ENCODE measurements at regions of chr22 and their contacts with region 1.

Region 1: DNA sequence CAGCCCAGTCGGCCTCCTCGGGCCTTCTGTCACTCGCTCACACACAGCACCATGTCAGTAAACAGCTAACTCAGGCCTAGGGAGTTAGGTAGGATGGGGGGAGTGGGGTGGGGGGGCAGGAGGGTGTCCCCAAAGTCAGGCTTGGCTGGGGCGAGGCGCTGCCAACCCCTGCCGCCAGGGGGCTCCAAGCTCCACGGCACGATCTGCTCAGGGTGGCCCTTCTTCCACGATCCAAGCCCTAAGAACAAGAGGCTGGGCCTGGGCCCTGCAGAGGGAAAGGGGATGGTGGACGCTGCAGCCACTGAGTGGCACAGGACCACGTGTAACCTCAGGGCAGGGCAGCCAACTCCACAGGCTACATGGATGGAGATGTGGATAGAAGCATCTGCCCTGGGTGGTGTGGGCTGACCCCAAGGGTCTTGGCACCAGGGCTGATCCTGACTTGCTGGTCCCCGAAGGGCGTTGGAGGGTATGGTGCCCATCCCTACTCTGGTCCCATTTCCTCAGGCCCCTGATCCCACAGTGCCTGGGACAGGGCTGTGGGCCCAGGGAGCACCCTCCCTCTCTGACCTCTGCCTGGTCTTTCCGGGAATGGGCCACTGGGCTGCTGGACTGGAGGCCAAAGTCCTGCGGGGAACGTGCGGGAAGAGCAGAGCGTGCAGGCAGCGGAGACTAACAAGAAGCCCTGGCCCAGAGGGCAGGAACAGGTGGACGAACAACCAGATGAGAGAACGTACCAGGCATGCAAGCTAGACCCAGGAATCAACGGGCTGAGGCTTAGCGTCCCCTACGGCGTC is 29.1 kb upstream of the TXNRD2 start:
- DNase-seq: peak; percentile 96 to 99 (median 98)
- ATAC-seq: peak; percentile 78
- H3K4me3 ChIP-seq: no peak overlapping the region
- H3K27ac ChIP-seq: no peak overlapping the region
- H3K4me1 ChIP-seq: peaks cover 18 to 79% of the 10 kb centered on the region in 2 experiments
- H3K27me3 ChIP-seq: no peaks in the 10 kb centered on the region
- CTCF ChIP-seq: peak; percentile 98 to 100 (median 99)
- EP300 ChIP-seq: peak; percentile 28; the same call in 1 of the 2 replicates
- POLR2A ChIP-seq: peak; percentile 59
- RAD21 ChIP-seq: peak; percentile 100

Region 2: DNA sequence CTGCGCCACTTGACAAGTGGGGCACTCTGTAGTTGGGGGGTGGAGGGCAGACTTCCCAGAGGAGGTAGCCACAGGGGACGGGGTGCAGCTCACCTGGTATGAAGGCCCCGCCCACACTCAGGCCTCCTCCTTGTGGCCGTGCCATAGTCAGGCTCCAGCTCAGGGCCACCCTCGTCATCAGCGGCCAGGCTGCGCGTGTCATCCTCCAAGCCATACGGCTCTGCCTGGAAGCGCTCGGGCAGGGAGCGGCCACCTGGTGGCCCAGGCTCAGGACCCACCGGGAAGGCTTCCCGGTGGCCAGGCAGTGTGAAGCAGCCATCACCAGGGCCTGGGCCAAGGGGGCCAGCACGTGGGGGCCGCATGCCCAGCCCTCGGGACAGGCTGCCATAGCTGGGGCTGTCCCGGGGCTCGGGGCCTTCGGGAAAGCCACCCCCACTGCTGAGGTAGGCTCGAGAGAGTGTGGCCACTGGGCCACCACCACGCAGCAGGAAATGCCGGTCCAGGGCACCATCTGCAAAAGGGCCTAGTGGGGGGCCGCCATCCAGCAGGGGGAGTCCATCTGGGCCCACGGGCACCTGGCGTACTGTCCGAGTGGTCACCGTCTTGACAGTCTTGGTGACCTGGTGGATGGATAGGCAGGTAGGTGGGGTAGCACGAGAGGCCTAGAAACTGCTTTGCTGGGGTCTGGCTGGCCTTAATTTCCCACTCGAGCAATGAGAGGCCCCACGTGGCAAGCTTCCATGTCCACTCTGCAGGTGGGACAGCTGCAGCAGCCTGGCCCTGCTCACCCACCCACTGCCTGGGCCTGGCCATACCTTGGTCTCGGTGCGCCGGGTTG is 10.7 kb after region 1 on chr22:
- CTCF ChIA-PET with region 1: no interaction called
- POLR2A ChIA-PET with region 1: interaction called, 56 read pairs
- in situ Hi-C with region 1: no loop called
- intact Hi-C with region 1: no loop called
- DNase-seq: no peak
- ATAC-seq: no peak
- H3K4me3 ChIP-seq: no peak overlapping the region
- H3K27ac ChIP-seq: no peak overlapping the region
- H3K4me1 ChIP-seq: peaks cover 5 to 78% of the 10 kb centered on the region in 2 experiments; a peak in 4 of 5 replicates
- H3K27me3 ChIP-seq: no peaks in the 10 kb centered on the region
- CTCF ChIP-seq: peak in 2 of 3 experiments; percentile 1 to 17; a peak in 2 of 6 replicates
- EP300 ChIP-seq: no peak
- POLR2A ChIP-seq: no peak
- RAD21 ChIP-seq: no peak

Region 3: GRCh38 chr22:19998232-19998951 is 27.7 kb after region 1 on chr22:
- CTCF ChIA-PET with region 1: no interaction called
- POLR2A ChIA-PET with region 1: interaction called, 4 read pairs
- in situ Hi-C with region 1: no loop called
- intact Hi-C with region 1: loop called (anchors 2 kb)
- DNase-seq: no peak
- ATAC-seq: no peak
- H3K4me3 ChIP-seq: no peak overlapping the region
- H3K27ac ChIP-seq: no peak overlapping the region
- H3K4me1 ChIP-seq: peaks cover 16 to 53% of the 10 kb centered on the region in 2 experiments; a peak in 4 of 5 replicates
- H3K27me3 ChIP-seq: no peaks in the 10 kb centered on the region
- CTCF ChIP-seq: no peak
- EP300 ChIP-seq: no peak
- POLR2A ChIP-seq: no peak
- RAD21 ChIP-seq: no peak

Region 4: GRCh38 chr22:20027966-20028854 is 57.5 kb after region 1 on chr22:
- CTCF ChIA-PET with region 1: interaction called, 30 read pairs
- POLR2A ChIA-PET with region 1: interaction called, 7 read pairs
- in situ Hi-C with region 1: no loop called
- intact Hi-C with region 1: loop called (anchors 1 kb)
- DNase-seq: peak in 1 of 4 experiments; percentile 78
- ATAC-seq: peak; percentile 52
- H3K4me3 ChIP-seq: no peak overlapping the region
- H3K27ac ChIP-seq: no peak overlapping the region
- H3K4me1 ChIP-seq: peaks cover 36 to 75% of the 10 kb centered on the region in 2 experiments
- H3K27me3 ChIP-seq: no peaks in the 10 kb centered on the region
- CTCF ChIP-seq: peak; percentile 73 to 85 (median 81)
- EP300 ChIP-seq: 0 out of 2 replicates have a peak, but pooled peaks have one; percentile 14
- POLR2A ChIP-seq: no peak
- RAD21 ChIP-seq: peak in 1 of 2 experiments; percentile 73; a peak in 3 of 4 replicates

Region 5: DNA sequence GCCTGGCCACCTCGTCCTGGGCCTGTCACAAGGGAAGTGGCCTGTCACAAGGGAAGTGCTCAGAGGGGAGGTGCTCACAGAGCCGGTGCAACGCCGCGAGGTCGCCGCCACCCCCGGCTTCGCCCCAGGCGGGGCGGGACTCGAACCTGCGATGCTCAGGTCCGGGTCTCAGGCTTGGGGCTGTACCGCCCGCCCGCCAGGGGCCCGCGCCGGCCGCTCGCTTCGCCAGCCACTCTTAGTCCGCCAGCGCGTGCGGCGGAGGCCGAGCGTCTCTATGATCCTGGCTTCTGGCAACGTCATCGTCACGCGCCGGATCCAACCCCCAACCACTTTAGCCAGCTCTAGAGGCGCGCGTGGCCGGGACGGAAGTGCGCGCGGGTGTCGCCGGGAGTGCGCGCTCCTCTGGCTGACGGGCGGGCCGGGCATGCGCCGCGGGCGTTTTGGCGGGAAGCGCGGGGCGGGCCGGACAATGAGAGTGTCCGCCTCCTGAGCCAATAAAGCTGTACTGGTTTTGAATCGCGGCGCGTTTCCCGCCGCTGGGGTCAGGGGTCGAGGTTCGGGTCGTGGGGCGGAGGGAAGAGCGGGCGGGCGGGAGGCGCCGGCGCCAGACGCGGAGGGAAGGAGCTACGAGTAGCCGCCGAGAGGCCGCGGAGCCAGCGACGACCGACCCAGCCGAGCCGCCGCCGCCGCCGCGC is 146.4 kb after region 1 on chr22 and contains the start of gene TRMT2A:
- CTCF ChIA-PET with region 1: no interaction called
- POLR2A ChIA-PET with region 1: interaction called, 51 read pairs
- in situ Hi-C with region 1: no loop called
- intact Hi-C with region 1: no loop called
- DNase-seq: peak; percentile 100
- ATAC-seq: peak; percentile 88
- H3K4me3 ChIP-seq: peak within 1 kb of the TSS; percentile 63
- H3K27ac ChIP-seq: peak within 1 kb of the TSS; percentile 94
- H3K4me1 ChIP-seq: peaks cover 25 to 90% of the 10 kb centered on the region in 2 experiments
- H3K27me3 ChIP-seq: no peaks in the 10 kb centered on the region
- CTCF ChIP-seq: peak; percentile 56 to 62 (median 57); a peak in 4 of 6 replicates
- EP300 ChIP-seq: peak; percentile 89
- POLR2A ChIP-seq: peak; percentile 90
- RAD21 ChIP-seq: peak in 1 of 2 experiments; percentile 49; a peak in 2 of 4 replicates
- polyA plus RNA-seq, gene TRMT2A: 1.6 to 6.6 TPM

Region 6: GRCh38 chr22:20238536-20238900 is 267.8 kb after region 1 on chr22:
- CTCF ChIA-PET with region 1: no interaction called
- POLR2A ChIA-PET with region 1: no interaction called
- in situ Hi-C with region 1: no loop called
- intact Hi-C with region 1: loop called (anchors 10 kb)
- DNase-seq: peak; percentile 89 to 99 (median 98)
- ATAC-seq: peak; percentile 91
- H3K4me3 ChIP-seq: no peak overlapping the region
- H3K27ac ChIP-seq: no peak overlapping the region
- H3K4me1 ChIP-seq: peaks cover 7 to 86% of the 10 kb centered on the region in 2 experiments; a peak in 3 of 5 replicates
- H3K27me3 ChIP-seq: peaks cover 43 to 98% of the 10 kb centered on the region in 2 experiments
- CTCF ChIP-seq: peak; percentile 98 to 99 (median 99)
- EP300 ChIP-seq: no peak
- POLR2A ChIP-seq: no peak
- RAD21 ChIP-seq: peak in 1 of 2 experiments; percentile 97; a peak in 2 of 4 replicates

Measured in K562 (cell line).